AG04449 (cell line): ENCODE measurements at regions of chr1 and their contacts with region 1.

Region 1: GRCh38 chr1:175154629-175155472 is 37.7 kb downstream of the KIAA0040 start:
- DNase-seq: no peak
- H3K4me3 ChIP-seq: no peak overlapping the region
- CTCF ChIP-seq: peak; percentile 73

Region 2: GRCh38 chr1:175138579-175138978 is 16.3 kb before region 1 on chr1:
- CTCF ChIA-PET with region 1: interaction called, 44 read pairs
- POLR2A ChIA-PET with region 1: no interaction called
- DNase-seq: no peak
- H3K4me3 ChIP-seq: no peak overlapping the region
- CTCF ChIP-seq: no peak

Region 3: GRCh38 chr1:175376194-175376593 is 221.3 kb after region 1 on chr1:
- CTCF ChIA-PET with region 1: no interaction called
- POLR2A ChIA-PET with region 1: no interaction called
- DNase-seq: no peak
- H3K4me3 ChIP-seq: no peak overlapping the region
- CTCF ChIP-seq: no peak